MCF 10A (cell line): ENCODE measurements at regions of chr1 and their contacts with region 1.

Region 1: GRCh38 chr1:227299241-227299627 is 19.1 kb downstream of the CDC42BPA start:
- DNase-seq: peak; percentile 55
- H3K4me3 Mint-ChIP-seq: peak overlapping the region; percentile 44
- H3K27ac Mint-ChIP-seq: peak overlapping the region; percentile 70
- H3K4me1 Mint-ChIP-seq: peaks cover 36% of the 10 kb centered on the region
- H3K27me3 Mint-ChIP-seq: no peaks in the 10 kb centered on the region
- CTCF ChIP-seq: no peak

Region 2: GRCh38 chr1:227219715-227220292 is 79.4 kb before region 1 on chr1:
- CTCF ChIA-PET with region 1: no interaction called
- POLR2A ChIA-PET with region 1: no interaction called
- intact Hi-C with region 1: no loop called
- DNase-seq: no peak
- H3K4me3 Mint-ChIP-seq: no peak overlapping the region
- H3K27ac Mint-ChIP-seq: no peak overlapping the region
- H3K4me1 Mint-ChIP-seq: peaks cover 27% of the 10 kb centered on the region
- H3K27me3 Mint-ChIP-seq: no peaks in the 10 kb centered on the region
- CTCF ChIP-seq: no peak

Region 3: DNA sequence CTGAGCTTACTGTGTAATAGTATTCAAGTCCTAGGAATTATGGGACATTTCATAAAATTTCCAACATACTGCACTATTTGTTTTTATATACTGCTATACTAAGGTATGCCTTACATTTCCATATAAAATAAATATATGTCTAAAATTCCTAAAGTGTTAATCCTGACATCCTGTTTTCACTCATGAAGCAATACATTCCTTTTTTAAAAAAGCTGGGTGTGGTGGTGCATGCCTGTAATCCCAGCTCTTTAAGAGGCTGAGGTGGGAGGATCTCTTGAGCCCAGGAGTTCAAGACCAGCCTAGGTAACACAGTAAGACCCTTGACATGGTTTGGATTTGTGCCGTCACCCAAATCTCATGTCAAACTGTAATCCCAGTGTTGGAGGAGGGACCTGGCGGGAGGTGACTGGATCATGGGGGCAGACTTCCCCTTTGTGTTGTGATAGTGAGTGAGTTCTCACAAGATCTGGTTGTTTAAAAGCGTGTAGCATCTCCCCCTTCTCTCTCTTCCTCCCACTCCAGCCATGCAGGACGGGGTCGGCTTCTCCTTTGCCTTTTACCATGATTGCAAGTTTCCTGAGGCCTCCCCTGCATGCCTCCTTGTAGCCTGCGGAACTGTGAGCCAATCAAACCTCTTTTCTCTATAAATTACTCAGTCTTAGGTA is 13.3 kb after region 1 on chr1:
- CTCF ChIA-PET with region 1: interaction called, 6 read pairs
- POLR2A ChIA-PET with region 1: interaction called, 175 read pairs
- intact Hi-C with region 1: no loop called
- DNase-seq: peak; percentile 51
- H3K4me3 Mint-ChIP-seq: no peak overlapping the region
- H3K27ac Mint-ChIP-seq: peak overlapping the region; percentile 7
- H3K4me1 Mint-ChIP-seq: peaks cover 57% of the 10 kb centered on the region
- H3K27me3 Mint-ChIP-seq: no peaks in the 10 kb centered on the region
- CTCF ChIP-seq: no peak

Region 4: DNA sequence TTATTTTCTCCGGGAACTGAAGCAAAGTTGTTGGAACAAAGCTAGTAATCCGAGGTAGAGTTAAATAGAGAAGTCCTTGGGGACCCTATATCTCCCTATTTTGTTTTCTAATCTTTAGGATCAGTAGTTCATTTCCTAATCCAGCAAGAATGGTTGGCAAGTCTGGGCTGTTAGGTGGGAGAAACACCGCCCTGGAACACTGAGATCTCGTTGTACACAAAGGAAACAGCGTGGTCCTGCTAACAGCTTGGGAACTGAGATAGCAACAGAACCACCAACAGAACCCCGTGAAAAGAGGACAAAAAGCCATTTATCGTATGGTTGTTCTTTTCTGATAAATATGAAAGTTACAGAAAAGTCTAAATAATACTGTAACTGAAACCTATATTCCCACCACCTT is 140.9 kb after region 1 on chr1:
- CTCF ChIA-PET with region 1: no interaction called
- POLR2A ChIA-PET with region 1: no interaction called
- intact Hi-C with region 1: no loop called
- DNase-seq: no peak
- H3K4me3 Mint-ChIP-seq: no peak overlapping the region
- H3K27ac Mint-ChIP-seq: no peak overlapping the region
- H3K4me1 Mint-ChIP-seq: peaks cover 16% of the 10 kb centered on the region
- H3K27me3 Mint-ChIP-seq: no peaks in the 10 kb centered on the region
- CTCF ChIP-seq: no peak